Left ventricle myocardium inferior (tissue), 1 donor: ENCODE measurements at regions of chr20 and their contacts with region 1.

Region 1: DNA sequence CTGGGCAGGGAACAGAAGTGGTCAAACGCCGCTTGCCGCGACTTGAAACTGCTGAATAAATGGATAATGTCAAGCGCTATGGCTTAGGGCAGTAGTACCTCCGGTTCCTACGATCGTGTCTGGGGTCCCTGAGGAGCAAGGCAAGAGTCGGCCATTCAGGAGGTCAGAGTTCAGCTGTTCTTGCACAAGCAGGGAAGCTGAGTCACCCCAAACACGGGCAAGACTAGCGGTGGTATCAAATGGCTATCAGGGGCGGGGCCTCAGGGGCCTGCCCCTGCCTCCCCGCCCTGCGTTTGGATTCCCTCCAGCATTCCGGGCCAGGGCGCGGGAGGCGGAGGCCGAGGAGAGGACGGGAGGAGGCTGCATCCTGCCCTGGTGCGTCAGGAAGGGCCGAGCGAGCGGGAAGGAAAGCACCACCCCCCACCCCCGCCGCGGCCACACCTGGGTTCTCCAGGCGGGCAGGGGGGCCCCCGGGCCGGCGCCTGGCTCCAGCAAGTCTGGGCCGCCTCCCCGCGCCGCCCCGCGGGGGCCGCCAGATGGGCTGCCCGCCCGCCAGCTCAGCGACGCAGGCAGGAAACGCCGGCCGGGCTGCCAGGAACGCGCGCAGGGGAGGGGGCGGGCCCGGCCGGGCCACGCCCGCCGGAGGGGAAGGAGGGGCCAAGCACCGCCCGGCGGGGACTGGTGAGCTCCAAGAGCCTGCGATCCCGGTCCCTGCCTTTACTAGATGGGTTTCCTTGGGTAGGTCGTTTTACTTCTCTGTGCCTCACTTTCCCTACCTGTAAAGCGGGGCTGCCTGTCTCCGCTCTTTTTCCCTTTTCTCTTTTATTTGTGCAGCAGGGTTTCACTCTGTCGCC is 32.2 kb upstream of the ID1 start:
- DNase-seq: peak; percentile 92
- H3K4me3 ChIP-seq: peak overlapping the region; percentile 66
- H3K27ac ChIP-seq: peak overlapping the region; percentile 96
- H3K4me1 ChIP-seq: peaks cover 58% of the 10 kb centered on the region
- H3K27me3 ChIP-seq: no peaks in the 10 kb centered on the region
- CTCF ChIP-seq: no peak

Region 2: GRCh38 chr20:31430568-31431115 is 142.3 kb before region 1 on chr20:
- intact Hi-C with region 1: no loop called
- DNase-seq: no peak
- H3K4me3 ChIP-seq: no peak overlapping the region
- H3K27ac ChIP-seq: no peak overlapping the region
- H3K4me1 ChIP-seq: no peaks in the 10 kb centered on the region
- H3K27me3 ChIP-seq: peaks cover 32% of the 10 kb centered on the region
- CTCF ChIP-seq: no peak

Region 3: DNA sequence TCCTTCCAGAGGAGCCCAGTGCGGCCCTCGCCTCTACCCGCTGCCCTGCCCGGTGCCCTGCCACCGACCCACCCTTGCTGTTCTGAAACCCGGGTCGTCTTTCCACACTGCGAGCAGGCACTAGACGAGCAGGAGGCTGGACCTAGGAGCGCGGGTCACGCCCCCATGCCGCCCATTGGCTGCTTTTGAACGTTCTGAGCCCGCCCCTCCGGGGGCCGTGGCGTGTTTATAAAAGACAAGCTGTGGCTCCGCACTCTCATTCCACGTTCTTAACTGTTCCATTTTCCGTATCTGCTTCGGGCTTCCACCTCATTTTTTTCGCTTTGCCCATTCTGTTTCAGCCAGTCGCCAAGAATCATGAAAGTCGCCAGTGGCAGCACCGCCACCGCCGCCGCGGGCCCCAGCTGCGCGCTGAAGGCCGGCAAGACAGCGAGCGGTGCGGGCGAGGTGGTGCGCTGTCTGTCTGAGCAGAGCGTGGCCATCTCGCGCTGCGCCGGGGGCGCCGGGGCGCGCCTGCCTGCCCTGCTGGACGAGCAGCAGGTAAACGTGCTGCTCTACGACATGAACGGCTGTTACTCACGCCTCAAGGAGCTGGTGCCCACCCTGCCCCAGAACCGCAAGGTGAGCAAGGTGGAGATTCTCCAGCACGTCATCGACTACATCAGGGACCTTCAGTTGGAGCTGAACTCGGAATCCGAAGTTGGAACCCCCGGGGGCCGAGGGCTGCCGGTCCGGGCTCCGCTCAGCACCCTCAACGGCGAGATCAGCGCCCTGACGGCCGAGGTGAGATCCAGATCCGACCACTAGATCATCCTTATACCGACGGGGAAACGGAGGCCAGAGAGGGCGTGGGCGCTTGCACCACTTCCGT is 32.3 kb after region 1 on chr20 and contains the start of gene ID1:
- intact Hi-C with region 1: loop called (anchors 2 kb)
- DNase-seq: peak; percentile 95
- H3K4me3 ChIP-seq: peak within 1 kb of the TSS; percentile 78
- H3K27ac ChIP-seq: peak within 1 kb of the TSS; percentile 93
- H3K4me1 ChIP-seq: peaks cover 62% of the 10 kb centered on the region
- H3K27me3 ChIP-seq: peaks cover 4% of the 10 kb centered on the region
- CTCF ChIP-seq: no peak
- total RNA-seq, gene ID1: 91.5 TPM

Region 4: GRCh38 chr20:32396646-32397160 is 823.8 kb after region 1 on chr20:
- intact Hi-C with region 1: no loop called
- DNase-seq: no peak
- H3K4me3 ChIP-seq: no peak overlapping the region
- H3K27ac ChIP-seq: no peak overlapping the region
- H3K4me1 ChIP-seq: peaks cover 11% of the 10 kb centered on the region
- H3K27me3 ChIP-seq: no peaks in the 10 kb centered on the region
- CTCF ChIP-seq: no peak